WTC11 (cell line): ENCODE measurements at regions of chr5 and their contacts with region 1.

Region 1: DNA sequence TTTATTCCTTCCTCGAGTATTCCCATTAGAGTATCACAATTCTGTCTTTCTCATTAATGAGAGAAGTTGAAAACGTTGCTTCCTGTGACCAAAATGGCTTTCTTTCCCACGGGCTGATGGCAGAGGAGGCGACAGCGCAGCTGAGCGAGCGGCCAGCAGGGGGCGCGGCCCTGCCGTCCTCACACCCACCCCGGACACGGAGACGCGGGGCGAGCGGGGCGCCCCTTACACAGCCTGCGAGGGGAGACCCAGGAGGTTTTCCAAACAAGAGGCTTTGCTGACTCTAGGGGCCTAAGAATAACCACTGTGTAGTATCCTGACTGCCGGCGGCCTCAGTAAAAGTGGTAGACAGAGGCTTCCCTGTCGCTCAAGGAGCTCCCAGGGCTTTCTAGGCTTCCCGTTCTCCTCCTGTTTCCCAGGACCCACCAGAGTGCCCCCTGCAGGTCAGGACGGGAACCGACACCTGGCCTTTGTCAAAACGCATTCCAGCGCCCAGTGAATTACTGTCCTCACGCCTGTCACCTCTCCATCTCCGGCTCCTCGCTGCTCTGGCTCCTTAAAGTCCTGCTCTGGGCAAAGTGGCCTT is 27.3 kb upstream of the FGF1 start:
- DNase-seq: peak; percentile 96
- ATAC-seq: peak; percentile 58
- H3K4me3 Mint-ChIP-seq: peak overlapping the region; percentile 51
- H3K27ac Mint-ChIP-seq: peak overlapping the region; percentile 57; the same call in 1 of the 2 replicates
- H3K4me1 Mint-ChIP-seq: peaks cover 55% of the 10 kb centered on the region
- H3K27me3 Mint-ChIP-seq: peaks cover 3% of the 10 kb centered on the region; the same call in 1 of the 2 replicates
- CTCF ChIP-seq: peak; percentile 99

Region 2: DNA sequence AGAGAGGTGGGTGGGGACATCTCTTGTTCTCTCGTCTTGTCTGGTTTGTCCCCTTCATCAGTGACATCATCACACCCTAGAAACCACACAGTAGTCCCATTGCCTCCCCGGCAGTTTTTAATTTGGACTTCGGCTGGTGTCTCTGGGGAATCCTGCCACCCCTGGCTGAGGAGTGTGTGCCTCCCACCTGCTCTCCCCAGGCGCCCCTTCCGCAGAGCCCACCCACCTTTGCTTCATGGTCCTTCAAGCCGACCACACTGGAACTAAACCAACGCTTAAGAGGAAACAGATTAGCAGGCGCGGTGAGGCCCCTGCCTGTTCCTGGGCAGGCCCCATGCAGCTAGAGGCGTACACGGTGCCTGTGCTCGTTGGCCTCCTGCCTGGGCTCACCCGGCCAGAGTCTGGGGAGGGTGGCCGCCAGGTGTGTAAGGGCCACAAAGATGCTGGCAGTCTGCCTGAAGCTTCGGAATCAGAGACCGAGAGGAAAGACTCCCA is 280.8 kb before region 1 on chr5:
- CTCF ChIA-PET with region 1: no interaction called
- POLR2A ChIA-PET with region 1: no interaction called
- DNase-seq: no peak
- ATAC-seq: no peak; the same call in 1 of the 2 replicates
- H3K4me3 Mint-ChIP-seq: no peak overlapping the region
- H3K27ac Mint-ChIP-seq: peak overlapping the region; percentile 58
- H3K4me1 Mint-ChIP-seq: peaks cover 47% of the 10 kb centered on the region
- H3K27me3 Mint-ChIP-seq: peaks cover 3% of the 10 kb centered on the region; the same call in 1 of the 2 replicates
- CTCF ChIP-seq: no peak

Region 3: DNA sequence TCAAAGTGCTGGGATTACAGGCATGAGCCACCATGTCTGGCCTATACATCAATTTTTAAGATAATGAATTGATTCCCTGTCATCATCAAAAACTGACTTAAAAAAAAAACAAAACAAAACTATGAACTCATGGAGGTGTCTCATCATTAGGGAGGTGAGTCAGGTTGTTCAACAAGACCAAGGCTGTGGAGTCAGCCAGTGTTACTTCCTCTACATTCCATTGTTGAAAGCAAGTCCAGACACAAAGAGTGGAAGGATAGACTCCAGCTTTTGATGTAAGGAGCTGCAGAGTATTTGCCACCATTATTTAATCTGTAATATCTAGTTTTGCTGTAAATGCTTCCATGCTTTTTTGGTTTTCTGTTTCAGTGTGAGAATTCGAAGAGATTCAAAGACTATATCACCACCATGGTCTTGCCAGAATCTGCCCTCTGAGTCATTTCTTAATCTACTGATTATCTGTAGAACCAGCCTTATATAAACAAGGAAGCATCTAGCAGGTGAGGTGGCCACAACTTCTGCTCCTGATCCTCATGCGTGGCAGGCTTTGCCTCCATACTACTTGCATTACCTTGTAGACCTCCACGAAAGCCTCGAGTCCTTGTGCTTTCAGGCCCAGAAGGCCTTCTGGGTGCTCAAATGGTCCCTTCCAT is 183.5 kb before region 1 on chr5:
- CTCF ChIA-PET with region 1: no interaction called
- POLR2A ChIA-PET with region 1: no interaction called
- DNase-seq: no peak
- ATAC-seq: no peak
- H3K4me3 Mint-ChIP-seq: no peak overlapping the region
- H3K27ac Mint-ChIP-seq: no peak overlapping the region; the same call in 1 of the 2 replicates
- H3K4me1 Mint-ChIP-seq: peaks cover 5% of the 10 kb centered on the region
- H3K27me3 Mint-ChIP-seq: no peaks in the 10 kb centered on the region
- CTCF ChIP-seq: no peak

Region 4: GRCh38 chr5:142611154-142611553 is 102.1 kb before region 1 on chr5:
- CTCF ChIA-PET with region 1: interaction called, 11 read pairs
- POLR2A ChIA-PET with region 1: no interaction called
- DNase-seq: peak; percentile 85
- ATAC-seq: peak; percentile 97; the same call in 1 of the 2 replicates
- H3K4me3 Mint-ChIP-seq: no peak overlapping the region
- H3K27ac Mint-ChIP-seq: no peak overlapping the region
- H3K4me1 Mint-ChIP-seq: peaks cover 9% of the 10 kb centered on the region
- H3K27me3 Mint-ChIP-seq: no peaks in the 10 kb centered on the region
- CTCF ChIP-seq: peak; percentile 79

Region 5: GRCh38 chr5:142685418-142686209 is 27.6 kb before region 1 on chr5 and contains the start of gene FGF1:
- CTCF ChIA-PET with region 1: interaction called, 30 read pairs
- POLR2A ChIA-PET with region 1: no interaction called
- DNase-seq: no peak
- ATAC-seq: no peak; the same call in 1 of the 2 replicates
- H3K4me3 Mint-ChIP-seq: no peak within 1 kb of the TSS
- H3K27ac Mint-ChIP-seq: peak within 1 kb of the TSS; percentile 93
- H3K4me1 Mint-ChIP-seq: peaks cover 50% of the 10 kb centered on the region
- H3K27me3 Mint-ChIP-seq: no peaks in the 10 kb centered on the region
- CTCF ChIP-seq: no peak
- total RNA-seq, gene FGF1: 0.21 to 0.55 TPM in 2 of 3 replicates, not detected in the other

Region 6: DNA sequence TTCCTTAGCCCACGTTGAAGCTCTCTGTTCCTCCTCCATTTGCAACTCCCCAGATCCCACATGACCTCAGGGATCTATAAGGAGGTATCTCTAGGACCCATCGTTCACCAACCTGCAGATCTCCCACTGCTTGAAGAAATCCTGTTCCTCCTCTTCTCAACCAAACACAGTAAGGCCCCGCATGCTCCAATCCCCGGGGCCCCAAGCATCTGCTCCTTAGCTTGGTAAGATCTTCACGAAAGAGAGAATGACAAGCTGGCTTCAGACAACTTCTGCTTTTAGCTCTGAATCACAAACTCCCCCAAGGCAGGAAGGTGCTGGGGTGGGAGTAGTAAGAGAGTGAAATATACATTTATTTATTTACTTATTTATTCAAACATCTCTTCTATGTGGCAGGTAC is 24.0 kb after region 1 on chr5:
- CTCF ChIA-PET with region 1: interaction called, 20 read pairs
- POLR2A ChIA-PET with region 1: no interaction called
- DNase-seq: no peak
- ATAC-seq: no peak
- H3K4me3 Mint-ChIP-seq: no peak overlapping the region
- H3K27ac Mint-ChIP-seq: no peak overlapping the region
- H3K4me1 Mint-ChIP-seq: peaks cover 18% of the 10 kb centered on the region
- H3K27me3 Mint-ChIP-seq: peaks cover 7% of the 10 kb centered on the region; the same call in 1 of the 2 replicates
- CTCF ChIP-seq: no peak

Region 7: DNA sequence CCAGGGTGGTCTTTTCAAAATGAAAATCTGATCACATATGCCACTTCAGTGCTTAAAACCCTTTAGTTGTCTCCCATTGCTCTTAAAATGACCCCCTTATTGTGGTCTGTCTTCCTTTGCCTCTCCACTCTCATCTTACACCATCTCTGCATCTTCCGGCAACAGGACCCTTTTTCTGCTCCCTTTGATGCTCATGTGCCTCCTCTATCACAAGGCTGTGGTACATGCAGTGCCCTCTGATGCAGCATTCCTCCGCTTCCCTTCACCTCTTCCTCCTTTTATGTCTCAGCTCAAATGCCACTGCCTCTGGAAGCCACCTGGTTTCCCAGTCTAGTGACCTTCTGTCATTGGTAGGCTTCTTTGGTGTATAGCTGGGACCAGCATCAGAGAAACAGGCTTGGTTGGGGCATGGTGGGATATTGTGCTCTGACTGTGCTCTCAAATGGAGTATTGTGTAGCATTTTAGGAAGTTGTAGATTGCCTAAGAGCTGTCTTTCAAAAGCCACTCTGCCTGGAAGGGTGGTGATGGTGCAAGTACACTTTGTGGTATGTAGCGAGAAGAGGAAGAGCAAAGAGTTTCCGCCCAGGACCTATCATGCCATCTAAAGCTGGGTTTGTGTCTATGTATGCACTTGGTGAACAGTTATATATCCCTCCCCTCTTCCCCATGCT is 85.0 kb after region 1 on chr5:
- CTCF ChIA-PET with region 1: interaction called, 13 read pairs
- POLR2A ChIA-PET with region 1: no interaction called
- DNase-seq: no peak
- ATAC-seq: no peak
- H3K4me3 Mint-ChIP-seq: no peak overlapping the region
- H3K27ac Mint-ChIP-seq: no peak overlapping the region
- H3K4me1 Mint-ChIP-seq: peaks cover 38% of the 10 kb centered on the region
- H3K27me3 Mint-ChIP-seq: no peaks in the 10 kb centered on the region
- CTCF ChIP-seq: no peak

Region 8: GRCh38 chr5:142888469-142889085 is 175.4 kb after region 1 on chr5:
- CTCF ChIA-PET with region 1: interaction called, 76 read pairs
- POLR2A ChIA-PET with region 1: no interaction called
- DNase-seq: no peak
- ATAC-seq: peak; percentile 79
- H3K4me3 Mint-ChIP-seq: no peak overlapping the region
- H3K27ac Mint-ChIP-seq: peak overlapping the region; percentile 55
- H3K4me1 Mint-ChIP-seq: peaks cover 37% of the 10 kb centered on the region
- H3K27me3 Mint-ChIP-seq: no peaks in the 10 kb centered on the region
- CTCF ChIP-seq: peak; percentile 70